Caco-2 (cell line): ENCODE measurements at regions of chr1 and their contacts with region 1.

Region 1: DNA sequence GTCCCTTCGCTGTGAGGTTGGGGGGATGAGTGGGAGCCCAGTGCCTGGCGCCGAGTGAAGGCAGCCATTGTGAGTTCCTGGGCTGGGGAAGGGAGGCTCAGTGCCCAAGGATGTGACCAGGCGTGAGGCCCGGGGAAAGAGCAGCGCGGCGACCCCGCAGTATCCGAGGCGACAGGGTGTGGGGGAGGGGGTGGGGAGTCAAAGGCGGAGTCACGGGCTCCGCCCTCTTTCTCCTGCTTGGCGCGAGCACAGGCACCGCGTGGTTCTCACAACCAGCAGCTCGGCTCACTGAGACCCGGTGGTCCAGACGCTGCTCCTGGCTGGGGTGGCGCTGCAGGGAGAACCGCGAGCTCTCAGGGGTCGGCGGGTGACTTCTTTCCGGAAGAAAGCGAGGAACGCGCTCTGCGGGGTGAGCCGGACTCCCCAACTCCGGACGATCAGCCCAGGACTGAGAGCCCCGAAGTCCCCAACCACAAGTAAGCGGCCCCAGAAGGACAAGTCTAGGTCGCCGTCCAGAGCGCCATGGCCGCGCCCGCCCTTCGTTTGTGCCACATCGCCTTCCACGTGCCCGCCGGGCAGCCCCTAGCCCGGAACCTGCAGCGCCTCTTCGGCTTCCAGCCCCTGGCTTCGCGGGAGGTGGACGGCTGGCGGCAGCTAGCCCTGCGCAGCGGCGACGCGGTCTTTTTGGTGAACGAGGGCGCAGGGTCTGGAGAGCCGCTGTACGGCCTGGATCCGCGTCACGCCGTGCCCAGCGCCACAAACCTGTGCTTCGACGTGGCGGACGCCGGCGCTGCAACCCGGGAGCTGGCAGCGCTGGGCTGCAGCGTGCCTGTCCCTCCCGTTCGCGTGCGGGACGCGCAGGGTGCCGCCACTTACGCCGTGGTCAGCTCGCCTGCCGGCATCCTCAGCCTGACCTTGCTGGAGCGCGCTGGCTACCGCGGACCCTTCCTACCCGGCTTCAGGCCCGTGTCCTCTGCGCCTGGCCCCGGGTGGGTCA is at the start of gene HPDL:
- DNase-seq: peak; percentile 88 to 91
- H3K4me3 ChIP-seq: peak within 1 kb of the TSS; percentile 98
- H3K4me3 Mint-ChIP-seq: peak within 1 kb of the TSS; percentile 89
- H3K27ac Mint-ChIP-seq: peak within 1 kb of the TSS; percentile 93
- H3K4me1 ChIP-seq: peaks cover 36% of the 10 kb centered on the region
- H3K4me1 Mint-ChIP-seq: peaks cover 16% of the 10 kb centered on the region
- H3K27me3 ChIP-seq: no peaks in the 10 kb centered on the region
- H3K27me3 Mint-ChIP-seq: no peaks in the 10 kb centered on the region
- CTCF ChIP-seq: peak in 1 of 2 experiments; percentile 6
- total RNA-seq, gene HPDL: 78.2 and 90.6 TPM in 2 replicates

Region 2: DNA sequence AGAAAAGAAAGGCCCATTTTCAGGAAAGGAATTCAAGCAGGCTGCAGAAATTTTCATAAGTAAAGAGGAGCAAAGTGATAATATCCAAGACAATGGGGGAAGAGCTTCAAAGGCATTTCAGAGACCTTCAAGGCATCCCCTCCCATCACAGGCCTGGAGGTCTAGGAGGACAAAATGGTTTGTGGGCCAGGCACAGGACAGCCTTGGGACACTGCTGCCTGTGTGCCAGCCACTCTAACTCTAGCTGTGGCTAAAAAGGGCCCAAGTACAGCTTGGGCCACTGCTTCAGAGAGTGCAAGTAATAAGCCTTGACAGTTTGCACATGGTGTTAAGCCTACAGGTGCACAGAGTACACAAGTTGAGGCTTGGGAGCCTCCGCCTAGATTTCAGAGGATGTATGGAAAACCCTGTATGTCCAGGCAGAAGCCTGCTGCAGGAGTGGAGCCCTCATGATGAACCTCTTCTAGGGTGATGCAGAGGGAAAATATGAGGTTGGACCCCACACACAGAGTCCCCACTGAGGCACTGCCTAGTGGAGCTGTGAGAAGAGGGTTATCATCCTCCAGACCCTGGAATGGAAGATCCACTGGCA is 68.8 kb before region 1 on chr1:
- CTCF ChIA-PET with region 1: no interaction called
- POLR2A ChIA-PET with region 1: no interaction called
- intact Hi-C with region 1: no loop called
- DNase-seq: peak in 1 of 2 experiments; percentile 9
- H3K4me3 ChIP-seq: no peak overlapping the region
- H3K4me3 Mint-ChIP-seq: no peak overlapping the region
- H3K27ac Mint-ChIP-seq: no peak overlapping the region
- H3K4me1 ChIP-seq: no peaks in the 10 kb centered on the region
- H3K4me1 Mint-ChIP-seq: no peaks in the 10 kb centered on the region
- H3K27me3 ChIP-seq: no peaks in the 10 kb centered on the region
- H3K27me3 Mint-ChIP-seq: no peaks in the 10 kb centered on the region
- CTCF ChIP-seq: no peak

Region 3: DNA sequence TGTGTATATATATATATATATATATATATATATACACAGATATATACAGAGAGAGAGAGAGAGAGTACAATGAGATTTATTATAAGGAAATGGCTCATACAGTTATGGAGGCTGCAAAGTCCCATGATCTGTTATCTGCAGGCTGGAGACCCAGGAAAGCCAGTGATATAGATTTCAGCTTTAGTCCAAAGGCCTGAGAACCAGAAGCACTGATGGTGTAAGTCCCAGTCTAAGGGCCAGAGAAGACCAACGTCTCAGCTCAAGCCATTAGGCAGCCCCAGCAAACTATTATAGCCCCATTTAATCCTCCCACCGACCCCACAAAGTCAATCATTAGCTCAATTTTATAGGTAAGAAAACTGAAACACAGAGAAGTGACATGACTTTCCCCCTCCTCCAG is 35.2 kb before region 1 on chr1:
- CTCF ChIA-PET with region 1: no interaction called
- POLR2A ChIA-PET with region 1: no interaction called
- intact Hi-C with region 1: no loop called
- DNase-seq: no peak
- H3K4me3 ChIP-seq: no peak overlapping the region
- H3K4me3 Mint-ChIP-seq: no peak overlapping the region
- H3K27ac Mint-ChIP-seq: no peak overlapping the region
- H3K4me1 ChIP-seq: no peaks in the 10 kb centered on the region
- H3K4me1 Mint-ChIP-seq: no peaks in the 10 kb centered on the region
- H3K27me3 ChIP-seq: no peaks in the 10 kb centered on the region
- H3K27me3 Mint-ChIP-seq: peaks cover 5% of the 10 kb centered on the region
- CTCF ChIP-seq: no peak

Region 4: DNA sequence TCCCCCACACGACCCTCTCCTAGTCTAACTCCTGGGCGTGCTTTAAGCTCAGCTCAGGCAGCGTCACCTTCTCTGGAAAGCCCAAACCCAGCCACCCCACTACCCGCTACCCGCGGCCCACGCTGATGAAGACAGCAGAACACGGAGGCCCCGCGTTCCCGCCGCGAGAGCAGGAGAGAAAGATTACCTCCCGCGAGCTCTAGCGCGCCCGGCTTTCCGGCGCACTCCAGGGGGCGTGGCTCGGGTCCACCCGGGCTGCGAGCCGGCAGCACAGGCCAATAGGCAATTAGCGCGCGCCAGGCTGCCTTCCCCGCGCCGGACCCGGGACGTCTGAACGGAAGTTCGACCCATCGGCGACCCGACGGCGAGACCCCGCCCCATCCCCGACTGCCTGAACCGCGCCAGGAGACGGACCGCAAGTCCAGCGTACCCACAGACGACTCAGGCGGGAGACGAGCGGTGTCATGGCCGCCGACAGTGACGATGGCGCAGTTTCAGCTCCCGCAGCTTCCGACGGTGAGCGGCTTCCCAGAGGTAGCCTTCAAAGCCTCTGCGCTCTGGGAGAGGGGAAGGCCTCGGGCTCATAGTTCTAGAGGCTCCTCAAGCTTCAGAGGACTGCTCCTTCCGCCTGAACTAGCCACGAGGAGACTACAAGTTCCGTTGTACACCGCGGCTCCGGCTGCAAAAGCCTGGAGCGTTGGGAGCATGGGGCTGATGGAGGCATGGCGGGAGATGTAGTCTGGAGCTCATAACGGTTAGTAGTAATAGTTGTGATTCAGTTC is 13.1 kb after region 1 on chr1 and contains the starts of genes MUTYH and TOE1:
- CTCF ChIA-PET with region 1: interaction called, 6 read pairs
- POLR2A ChIA-PET with region 1: interaction called, 68 read pairs
- intact Hi-C with region 1: loop called (anchors 1 kb)
- DNase-seq: peak; percentile 96
- H3K4me3 ChIP-seq: peak within 1 kb of the TSS; percentile 67
- H3K4me3 Mint-ChIP-seq: peak within 1 kb of the TSS; percentile 99
- H3K27ac Mint-ChIP-seq: peak within 1 kb of the TSS; percentile 99
- H3K4me1 ChIP-seq: peaks cover 39% of the 10 kb centered on the region
- H3K4me1 Mint-ChIP-seq: peaks cover 43% of the 10 kb centered on the region
- H3K27me3 ChIP-seq: no peaks in the 10 kb centered on the region
- H3K27me3 Mint-ChIP-seq: no peaks in the 10 kb centered on the region
- CTCF ChIP-seq: no peak
- total RNA-seq, gene MUTYH: 46.3 and 48.4 TPM in 2 replicates
- total RNA-seq, gene TOE1: 15.5 and 19.0 TPM in 2 replicates